ENCODE measurements at regions of chr13 and their contacts with region 1.

Region 1: GRCh38 chr13:79775830-79776229 is 294.9 kb downstream of the NDFIP2 start:
- DNase-seq: peak in 1 of 2 donors; percentile 36
- ATAC-seq: peak in 7 of 8 donors; percentile 58 to 82 (median 71)
- H3K4me3 ChIP-seq: no peak overlapping the region
- H3K27ac ChIP-seq: no peak overlapping the region
- H3K4me1 ChIP-seq: peaks cover 0 to 19% (median 0%) of the 10 kb centered on the region in 9 donors
- H3K27me3 ChIP-seq: no peaks in the 10 kb centered on the region
- CTCF ChIP-seq: peak in 8 of 9 donors; percentile 37 to 76 (median 64)

Region 2: DNA sequence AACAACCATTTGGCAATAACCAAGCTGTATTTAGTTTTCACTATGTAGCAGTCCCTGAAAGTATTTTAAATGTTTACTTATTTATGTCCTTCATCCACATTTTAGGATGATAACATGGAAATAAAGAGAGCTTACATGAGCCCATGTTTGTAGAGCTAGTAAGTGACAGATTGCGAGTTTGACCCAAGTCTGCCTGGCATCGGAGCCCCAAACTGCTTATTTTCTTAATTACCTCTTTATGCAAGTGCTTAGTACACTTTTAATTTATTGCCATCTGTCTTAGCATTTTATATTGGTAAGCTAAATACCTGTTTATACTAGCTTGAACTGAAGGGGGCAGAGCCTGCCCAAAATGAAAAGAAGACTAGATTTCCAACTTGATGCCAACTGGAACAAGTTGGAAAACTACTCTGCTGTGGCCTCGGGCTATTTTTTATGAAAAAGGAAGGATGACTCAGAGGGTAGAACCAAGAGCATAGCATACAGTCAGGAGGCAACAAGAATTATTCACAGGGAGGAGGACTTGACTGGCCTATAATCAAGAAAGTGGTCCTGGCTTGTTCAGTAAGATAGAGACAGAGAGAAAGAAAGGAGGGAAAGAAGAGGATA is 144.7 kb before region 1 on chr13:
- intact Hi-C with region 1: loop called in 2 of 10 experiments (anchors 10 kb)
- DNase-seq: peak in 1 of 2 donors; percentile 7
- ATAC-seq: peak; percentile 60 to 93 (median 78)
- H3K4me3 ChIP-seq: no peak overlapping the region
- H3K27ac ChIP-seq: peak overlapping the region in 1 of 10 donors; percentile 35
- H3K4me1 ChIP-seq: peaks cover 0 to 6% (median 0%) of the 10 kb centered on the region in 9 donors
- H3K27me3 ChIP-seq: no peaks in the 10 kb centered on the region
- CTCF ChIP-seq: peak in 8 of 9 donors; percentile 14 to 55 (median 43)

Region 3: DNA sequence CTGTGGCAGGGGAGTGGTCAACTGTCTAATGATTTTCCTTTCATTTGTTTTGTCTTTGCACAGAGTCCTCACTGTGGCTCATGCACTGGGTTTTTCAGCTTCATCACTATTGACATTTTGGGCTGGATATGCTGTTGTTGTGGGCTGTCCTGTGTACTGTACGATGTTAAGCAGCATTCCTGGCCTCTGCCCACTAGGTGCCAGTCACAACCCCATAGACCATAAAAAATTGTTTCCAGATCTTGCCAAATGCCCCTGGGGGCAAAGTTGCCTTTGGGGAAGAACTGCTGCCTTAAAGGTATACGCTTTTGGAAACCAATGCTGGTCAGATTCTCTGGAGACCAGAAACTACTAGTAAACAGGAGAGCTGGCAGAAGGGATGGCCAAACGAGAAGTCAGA is 254.7 kb after region 1 on chr13:
- intact Hi-C with region 1: loop called in 2 of 10 experiments (anchors 10 kb)
- DNase-seq: peak in 1 of 2 donors; percentile 30
- ATAC-seq: peak; percentile 42 to 82 (median 75)
- H3K4me3 ChIP-seq: no peak overlapping the region
- H3K27ac ChIP-seq: no peak overlapping the region
- H3K4me1 ChIP-seq: peaks cover 0 to 7% (median 0%) of the 10 kb centered on the region in 9 donors
- H3K27me3 ChIP-seq: no peaks in the 10 kb centered on the region
- CTCF ChIP-seq: peak in 8 of 9 donors; percentile 8 to 58 (median 38)